ENCODE measurements at regions of chr17 and their contacts with region 1.

Region 1: DNA sequence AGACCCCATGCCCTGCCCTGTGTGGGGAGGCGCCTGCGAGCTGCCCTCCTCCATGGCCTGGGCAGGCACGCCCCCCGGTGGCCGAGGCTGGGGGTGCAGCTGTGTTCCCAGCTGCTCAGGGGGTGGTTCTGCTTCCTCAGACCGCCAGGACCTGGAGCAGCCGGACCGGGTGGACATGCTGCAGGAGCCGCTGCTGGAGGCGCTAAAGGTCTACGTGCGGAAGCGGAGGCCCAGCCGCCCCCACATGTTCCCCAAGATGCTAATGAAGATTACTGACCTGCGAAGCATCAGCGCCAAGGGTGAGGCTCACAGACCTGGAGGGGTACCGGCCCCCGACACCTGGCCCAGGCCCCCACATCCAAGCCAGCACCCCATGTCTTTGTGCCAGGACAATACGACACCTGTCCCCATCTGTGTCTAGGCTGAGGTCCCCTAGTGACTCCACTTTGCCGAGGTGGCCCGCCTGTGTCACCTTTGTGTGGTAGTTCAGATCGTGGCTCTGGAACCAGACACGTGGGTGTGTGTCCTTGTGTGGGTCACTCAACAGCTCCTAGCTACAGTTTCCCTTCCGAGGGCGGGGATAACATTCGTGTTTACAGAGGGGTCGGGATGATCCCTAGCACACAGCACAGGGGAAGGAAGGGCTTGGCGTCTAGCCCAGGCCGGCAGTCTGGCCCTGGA is 9.3 kb downstream of the GJD3 start:
- DNase-seq: no peak
- H3K4me3 ChIP-seq: no peak overlapping the region
- H3K27ac ChIP-seq: no peak overlapping the region
- H3K27me3 ChIP-seq: no peaks in the 10 kb centered on the region
- CTCF ChIP-seq: peak; percentile 93

Region 2: GRCh38 chr17:40309031-40309948 is 46.0 kb before region 1 on chr17 and contains the start of gene RARA:
- CTCF ChIA-PET with region 1: interaction called, 112 read pairs
- POLR2A ChIA-PET with region 1: interaction called, 3 read pairs
- DNase-seq: no peak
- H3K4me3 ChIP-seq: peak within 1 kb of the TSS; percentile 57
- H3K27ac ChIP-seq: no peak within 1 kb of the TSS
- H3K27me3 ChIP-seq: no peaks in the 10 kb centered on the region
- CTCF ChIP-seq: no peak
- polyA plus RNA-seq, gene RARA: 4.9 and 7.5 TPM in 2 replicates